Activated CD4-positive, alpha-beta memory T cell treated with anti-CD3 and anti-CD28 coated beads for 36 hours (primary cell): ENCODE measurements at regions of chr12 and their contacts with region 1.

Region 1: GRCh38 chr12:124713436-124714082 is 146.1 kb upstream of the NCOR2 start:
- DNase-seq: peak; percentile 78
- H3K4me3 Mint-ChIP-seq: peak overlapping the region; percentile 34
- H3K27ac Mint-ChIP-seq: peak overlapping the region; percentile 73
- H3K4me1 Mint-ChIP-seq: peaks cover 21% of the 10 kb centered on the region
- H3K27me3 Mint-ChIP-seq: peaks cover 9% of the 10 kb centered on the region

Region 2: DNA sequence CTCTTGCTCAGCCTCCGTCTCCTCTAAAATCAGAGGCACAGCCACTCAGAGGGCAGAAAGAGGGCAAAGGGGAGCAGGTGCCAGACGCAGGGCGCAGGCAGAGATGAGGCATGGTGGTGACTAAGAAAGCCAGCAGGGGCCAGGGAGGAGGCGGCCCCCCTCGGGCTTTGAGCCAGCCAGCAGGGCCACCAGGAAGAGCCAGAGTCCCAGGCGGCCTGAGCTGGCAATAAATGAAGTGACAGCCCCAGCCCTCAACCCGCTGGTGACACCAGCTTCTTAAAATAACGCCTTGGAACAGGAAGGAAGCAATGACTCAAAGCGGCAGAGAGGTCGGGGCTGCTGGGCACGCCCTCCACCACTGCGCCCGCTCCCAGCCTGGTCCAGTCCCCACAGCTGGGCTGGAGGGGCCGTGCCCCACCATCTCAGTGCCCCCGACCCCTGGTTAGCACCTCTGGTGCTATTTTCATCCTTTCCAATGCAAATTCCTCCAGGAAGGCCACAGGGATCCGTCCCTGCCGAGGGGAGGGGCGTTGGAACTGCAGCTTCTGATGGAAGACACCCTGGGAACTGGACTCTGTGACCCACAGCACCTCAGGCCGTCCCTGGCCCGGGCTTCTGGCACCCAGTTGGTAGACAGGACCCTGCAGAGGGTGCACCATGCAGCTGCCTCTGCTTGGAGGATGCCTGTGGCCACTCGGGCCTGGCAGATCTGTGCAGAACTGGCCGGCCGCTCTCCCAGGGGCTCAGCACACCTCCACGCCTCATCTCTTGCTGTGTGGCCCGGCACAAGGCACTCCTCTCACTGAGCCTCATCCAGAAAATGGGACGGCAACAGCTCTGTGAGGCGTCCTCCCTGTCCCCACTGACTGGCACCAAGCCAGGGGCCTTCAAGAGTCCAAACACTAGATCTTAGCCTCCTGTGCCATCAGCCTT is 259.9 kb before region 1 on chr12:
- CTCF ChIA-PET with region 1: no interaction called
- POLR2A ChIA-PET with region 1: no interaction called
- intact Hi-C with region 1: loop called (anchors 5 kb)
- DNase-seq: peak; percentile 94
- H3K4me3 Mint-ChIP-seq: peak overlapping the region; percentile 12
- H3K27ac Mint-ChIP-seq: peak overlapping the region; percentile 54
- H3K4me1 Mint-ChIP-seq: peaks cover 52% of the 10 kb centered on the region
- H3K27me3 Mint-ChIP-seq: no peaks in the 10 kb centered on the region

Region 3: GRCh38 chr12:124545508-124546418 is 167.8 kb before region 1 on chr12:
- CTCF ChIA-PET with region 1: interaction called, 4 read pairs
- POLR2A ChIA-PET with region 1: no interaction called
- intact Hi-C with region 1: loop called (anchors 1 kb)
- DNase-seq: peak; percentile 85
- H3K4me3 Mint-ChIP-seq: no peak overlapping the region
- H3K27ac Mint-ChIP-seq: peak overlapping the region; percentile 70
- H3K4me1 Mint-ChIP-seq: peaks cover 72% of the 10 kb centered on the region
- H3K27me3 Mint-ChIP-seq: no peaks in the 10 kb centered on the region

Region 4: DNA sequence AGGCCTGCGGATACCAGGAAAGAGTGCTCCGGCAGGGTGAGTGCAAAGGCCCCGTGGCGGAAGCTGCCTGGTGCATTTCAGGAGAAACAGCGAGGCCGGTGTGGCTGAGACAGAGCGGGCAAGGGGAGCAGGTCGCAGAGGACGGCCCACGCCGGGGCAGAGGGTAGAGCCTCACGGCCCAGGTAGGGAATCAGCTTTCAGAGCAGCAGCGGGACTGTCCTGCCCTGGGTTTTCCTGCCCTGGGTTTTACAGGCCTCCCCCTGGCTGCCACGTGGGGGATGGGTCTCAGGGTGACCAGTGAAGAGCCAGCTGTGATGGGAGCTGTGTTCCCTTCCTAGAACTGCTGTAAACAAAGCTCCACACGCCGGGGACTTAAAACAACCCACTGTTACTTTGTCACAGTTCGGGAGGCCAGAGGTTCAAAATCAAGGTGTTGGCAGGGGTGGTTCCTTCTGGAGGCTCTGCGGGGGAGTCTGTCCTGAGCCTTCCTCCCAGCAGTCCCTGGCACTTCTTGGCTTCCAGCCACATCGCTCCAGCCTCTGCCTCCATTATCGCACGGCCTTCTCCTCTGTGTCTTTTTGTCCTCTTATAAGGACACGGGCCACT is 156.6 kb before region 1 on chr12:
- CTCF ChIA-PET with region 1: no interaction called
- POLR2A ChIA-PET with region 1: no interaction called
- intact Hi-C with region 1: no loop called
- DNase-seq: no peak
- H3K4me3 Mint-ChIP-seq: no peak overlapping the region
- H3K27ac Mint-ChIP-seq: no peak overlapping the region
- H3K4me1 Mint-ChIP-seq: peaks cover 42% of the 10 kb centered on the region
- H3K27me3 Mint-ChIP-seq: no peaks in the 10 kb centered on the region

Region 5: DNA sequence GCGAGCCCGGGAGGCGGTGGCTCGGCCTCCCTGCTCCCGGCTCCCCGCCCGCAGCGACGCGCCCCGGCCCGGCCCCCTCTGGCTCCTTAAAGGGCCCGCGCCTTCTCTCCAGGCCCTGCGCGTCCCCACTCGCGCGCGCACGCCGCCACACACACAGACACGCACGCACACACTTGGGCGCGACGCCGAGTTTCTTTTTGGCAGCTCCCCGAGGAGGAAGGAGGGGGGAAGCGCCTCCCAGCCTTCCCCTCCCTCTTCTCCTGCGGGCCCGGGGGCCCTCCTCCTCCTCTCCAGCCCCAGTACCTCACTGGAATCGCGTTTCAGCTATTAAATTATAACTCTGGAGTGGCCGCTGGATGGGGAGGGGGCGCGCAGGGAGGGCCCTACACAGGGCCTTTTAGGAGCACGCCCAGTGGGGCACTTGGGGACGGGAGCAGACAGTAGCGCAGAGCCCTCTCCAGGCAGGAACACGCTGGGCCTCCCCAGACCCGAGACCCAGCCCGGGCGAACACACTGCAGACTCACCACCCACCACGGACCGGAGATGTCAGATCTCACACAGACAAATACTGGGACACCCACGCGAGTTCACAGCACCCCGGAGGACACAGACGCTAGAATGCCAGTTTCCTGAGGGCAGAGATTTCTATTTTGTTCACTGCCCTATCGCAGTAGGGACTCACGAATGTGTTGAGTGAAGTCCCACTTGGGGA is 145.7 kb before region 1 on chr12:
- CTCF ChIA-PET with region 1: no interaction called
- POLR2A ChIA-PET with region 1: no interaction called
- intact Hi-C with region 1: no loop called
- DNase-seq: peak; percentile 83
- H3K4me3 Mint-ChIP-seq: peak overlapping the region; percentile 74
- H3K27ac Mint-ChIP-seq: peak overlapping the region; percentile 42
- H3K4me1 Mint-ChIP-seq: peaks cover 26% of the 10 kb centered on the region
- H3K27me3 Mint-ChIP-seq: no peaks in the 10 kb centered on the region

Region 6: DNA sequence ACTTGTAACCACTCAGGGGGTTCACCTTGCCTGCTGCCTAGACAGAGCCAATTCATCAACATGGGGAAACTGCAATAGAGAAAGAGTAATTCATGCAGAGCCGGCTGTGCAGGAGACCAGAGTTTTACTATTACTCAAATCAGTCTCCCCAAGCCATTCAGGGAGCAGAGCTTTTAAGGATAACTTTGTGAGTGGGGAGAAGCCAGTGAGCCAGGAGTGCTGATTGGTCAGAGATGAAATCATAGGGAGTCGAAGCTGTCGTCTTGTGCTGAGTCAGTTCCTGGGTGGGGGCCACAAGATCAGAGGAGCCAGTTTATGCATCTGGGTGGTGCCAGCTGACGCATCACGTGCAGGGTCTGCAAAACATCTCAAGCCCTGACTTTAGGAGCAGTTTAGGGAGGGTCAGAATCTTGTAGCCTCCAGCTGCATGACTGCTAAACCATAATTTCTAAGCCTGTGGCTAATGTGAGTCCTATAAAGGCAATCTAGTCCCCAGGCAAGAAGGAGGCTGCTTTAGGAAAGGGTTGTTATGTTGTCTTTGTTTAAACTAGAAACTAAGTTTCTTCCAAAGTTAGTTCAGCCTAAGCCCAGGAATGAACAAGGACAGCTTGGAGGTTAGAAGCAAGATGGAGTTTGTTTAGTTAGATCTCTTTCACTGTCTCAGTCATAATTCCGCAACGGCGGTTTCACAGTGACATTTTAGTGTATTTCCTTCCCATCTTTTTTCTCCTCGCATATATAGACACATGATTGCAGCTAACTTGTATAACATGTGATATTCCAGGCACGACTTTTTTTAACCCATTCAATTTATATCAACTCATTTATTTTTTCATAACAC is 77.2 kb before region 1 on chr12:
- CTCF ChIA-PET with region 1: no interaction called
- POLR2A ChIA-PET with region 1: no interaction called
- intact Hi-C with region 1: loop called (anchors 1 kb)
- DNase-seq: peak; percentile 87
- H3K4me3 Mint-ChIP-seq: no peak overlapping the region
- H3K27ac Mint-ChIP-seq: no peak overlapping the region
- H3K4me1 Mint-ChIP-seq: peaks cover 16% of the 10 kb centered on the region
- H3K27me3 Mint-ChIP-seq: peaks cover 2% of the 10 kb centered on the region

Region 7: GRCh38 chr12:124680863-124681778 is 32.4 kb before region 1 on chr12:
- CTCF ChIA-PET with region 1: interaction called, 4 read pairs
- POLR2A ChIA-PET with region 1: no interaction called
- intact Hi-C with region 1: loop called (anchors 2 kb)
- DNase-seq: peak; percentile 64
- H3K4me3 Mint-ChIP-seq: no peak overlapping the region
- H3K27ac Mint-ChIP-seq: no peak overlapping the region
- H3K4me1 Mint-ChIP-seq: peaks cover 21% of the 10 kb centered on the region
- H3K27me3 Mint-ChIP-seq: no peaks in the 10 kb centered on the region